ENCODE measurements at regions of chr5 and their contacts with region 1.

Region 1: GRCh38 chr5:140207250-140207964 is 32.4 kb downstream of the CYSTM1 start:
- DNase-seq: no peak
- H3K4me3 ChIP-seq: no peak overlapping the region
- H3K27ac ChIP-seq: no peak overlapping the region
- H3K4me1 ChIP-seq: peaks cover 0 to 5% (median 4%) of the 10 kb centered on the region in 4 experiments; a peak in 5 of 7 replicates
- H3K27me3 ChIP-seq: no peaks in the 10 kb centered on the region
- CTCF ChIP-seq: no peak
- EP300 ChIP-seq: no peak
- POLR2A ChIP-seq: no peak
- RAD21 ChIP-seq: no peak

Region 2: GRCh38 chr5:139415221-139415861 is 792.1 kb before region 1 on chr5:
- CTCF ChIA-PET with region 1: no interaction called
- POLR2A ChIA-PET with region 1: no interaction called
- DNase-seq: no peak
- H3K4me3 ChIP-seq: no peak overlapping the region
- H3K27ac ChIP-seq: no peak overlapping the region
- H3K4me1 ChIP-seq: peaks cover 4 to 9% (median 6%) of the 10 kb centered on the region in 4 experiments; a peak in 4 of 7 replicates
- H3K27me3 ChIP-seq: no peaks in the 10 kb centered on the region
- CTCF ChIP-seq: no peak
- EP300 ChIP-seq: no peak
- POLR2A ChIP-seq: no peak
- RAD21 ChIP-seq: no peak

Region 3: DNA sequence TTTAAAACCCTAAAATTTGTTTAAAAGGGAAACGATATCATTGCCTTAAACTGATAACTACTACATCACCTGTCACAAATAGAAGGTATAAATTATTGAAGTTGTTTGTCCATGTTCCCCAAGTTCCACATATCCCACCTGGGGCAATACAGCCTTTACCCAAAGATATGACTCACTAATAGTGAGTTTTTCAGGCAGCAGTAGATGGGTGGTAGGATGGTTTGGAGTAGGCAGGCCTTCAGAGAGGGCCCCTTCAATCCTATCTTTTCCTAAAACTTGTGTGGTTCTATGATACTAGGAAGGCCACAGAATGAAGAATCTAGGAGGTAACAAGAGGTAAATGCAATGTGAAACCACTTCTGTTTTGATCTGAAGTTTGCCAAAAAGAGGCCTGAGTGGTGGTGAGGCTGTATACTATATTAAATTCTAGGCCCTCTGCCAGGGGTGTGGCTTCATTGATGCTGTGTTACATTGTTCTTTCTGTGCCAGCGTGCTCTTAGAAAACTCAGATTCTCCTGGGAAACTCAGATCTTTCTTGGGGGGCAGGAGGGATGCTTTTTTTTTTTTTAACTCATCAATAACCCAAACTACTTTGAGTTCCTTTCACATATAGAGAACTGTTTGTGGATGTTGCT is 25.2 kb before region 1 on chr5:
- CTCF ChIA-PET with region 1: interaction called, 15 read pairs
- POLR2A ChIA-PET with region 1: no interaction called
- DNase-seq: no peak
- H3K4me3 ChIP-seq: no peak overlapping the region
- H3K27ac ChIP-seq: no peak overlapping the region
- H3K4me1 ChIP-seq: peaks cover 2 to 7% (median 4%) of the 10 kb centered on the region in 4 experiments
- H3K27me3 ChIP-seq: no peaks in the 10 kb centered on the region
- CTCF ChIP-seq: no peak
- EP300 ChIP-seq: no peak
- POLR2A ChIP-seq: no peak
- RAD21 ChIP-seq: no peak

Region 4: GRCh38 chr5:140189977-140190871 is 17.2 kb before region 1 on chr5:
- CTCF ChIA-PET with region 1: interaction called, 23 read pairs
- POLR2A ChIA-PET with region 1: interaction called, 5 read pairs
- DNase-seq: no peak
- H3K4me3 ChIP-seq: no peak overlapping the region
- H3K27ac ChIP-seq: no peak overlapping the region
- H3K4me1 ChIP-seq: peaks cover 0 to 9% (median 2%) of the 10 kb centered on the region in 4 experiments; a peak in 2 of 7 replicates
- H3K27me3 ChIP-seq: no peaks in the 10 kb centered on the region
- CTCF ChIP-seq: no peak
- EP300 ChIP-seq: no peak
- POLR2A ChIP-seq: no peak
- RAD21 ChIP-seq: no peak

Region 5: GRCh38 chr5:140196115-140196814 is 11.1 kb before region 1 on chr5:
- CTCF ChIA-PET with region 1: interaction called, 23 read pairs
- POLR2A ChIA-PET with region 1: interaction called, 5 read pairs
- DNase-seq: no peak
- H3K4me3 ChIP-seq: no peak overlapping the region
- H3K27ac ChIP-seq: no peak overlapping the region
- H3K4me1 ChIP-seq: peaks cover 0 to 7% (median 2%) of the 10 kb centered on the region in 4 experiments; a peak in 3 of 7 replicates
- H3K27me3 ChIP-seq: no peaks in the 10 kb centered on the region
- CTCF ChIP-seq: no peak
- EP300 ChIP-seq: no peak
- POLR2A ChIP-seq: no peak
- RAD21 ChIP-seq: no peak

Region 6: DNA sequence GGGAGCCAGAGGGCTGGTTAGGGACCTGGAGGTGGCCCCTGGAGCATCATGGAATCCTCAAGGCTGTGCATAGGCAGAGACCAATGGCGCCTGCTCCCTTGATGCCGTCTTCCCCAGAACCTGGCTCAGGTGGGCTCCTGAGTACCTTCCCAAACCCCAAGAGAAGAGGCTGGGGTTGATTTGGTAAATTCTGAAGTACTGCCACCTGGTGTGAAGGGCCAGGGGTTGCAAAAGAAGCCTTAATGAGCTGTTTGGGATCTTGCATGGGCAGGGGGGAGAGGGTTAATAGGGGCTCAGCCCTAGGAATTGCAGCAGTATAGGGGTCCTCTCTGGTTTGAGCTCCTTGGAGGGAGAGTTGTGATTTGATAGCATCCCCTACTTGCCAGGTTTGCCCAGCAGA is 19.6 kb after region 1 on chr5:
- CTCF ChIA-PET with region 1: interaction called, 12 read pairs
- POLR2A ChIA-PET with region 1: no interaction called
- DNase-seq: no peak
- H3K4me3 ChIP-seq: no peak overlapping the region
- H3K27ac ChIP-seq: no peak overlapping the region
- H3K4me1 ChIP-seq: no peaks in the 10 kb centered on the region
- H3K27me3 ChIP-seq: no peaks in the 10 kb centered on the region; a peak in 1 of 7 replicates
- CTCF ChIP-seq: peak in 2 of 3 experiments; percentile 13 to 42; a peak in 3 of 4 replicates
- EP300 ChIP-seq: no peak
- POLR2A ChIP-seq: no peak
- RAD21 ChIP-seq: peak; percentile 24 to 44; a peak in 2 of 4 replicates

Region 7: GRCh38 chr5:140235791-140236551 is 28.6 kb after region 1 on chr5:
- CTCF ChIA-PET with region 1: interaction called, 17 read pairs
- POLR2A ChIA-PET with region 1: no interaction called
- DNase-seq: no peak
- H3K4me3 ChIP-seq: no peak overlapping the region
- H3K27ac ChIP-seq: no peak overlapping the region
- H3K4me1 ChIP-seq: peaks cover 0 to under 1% (median under 1%) of the 10 kb centered on the region in 4 experiments; a peak in 3 of 7 replicates
- H3K27me3 ChIP-seq: no peaks in the 10 kb centered on the region
- CTCF ChIP-seq: no peak
- EP300 ChIP-seq: no peak
- POLR2A ChIP-seq: no peak
- RAD21 ChIP-seq: no peak